ENCODE measurements at regions of chr11 and their contacts with region 1.

Region 1: DNA sequence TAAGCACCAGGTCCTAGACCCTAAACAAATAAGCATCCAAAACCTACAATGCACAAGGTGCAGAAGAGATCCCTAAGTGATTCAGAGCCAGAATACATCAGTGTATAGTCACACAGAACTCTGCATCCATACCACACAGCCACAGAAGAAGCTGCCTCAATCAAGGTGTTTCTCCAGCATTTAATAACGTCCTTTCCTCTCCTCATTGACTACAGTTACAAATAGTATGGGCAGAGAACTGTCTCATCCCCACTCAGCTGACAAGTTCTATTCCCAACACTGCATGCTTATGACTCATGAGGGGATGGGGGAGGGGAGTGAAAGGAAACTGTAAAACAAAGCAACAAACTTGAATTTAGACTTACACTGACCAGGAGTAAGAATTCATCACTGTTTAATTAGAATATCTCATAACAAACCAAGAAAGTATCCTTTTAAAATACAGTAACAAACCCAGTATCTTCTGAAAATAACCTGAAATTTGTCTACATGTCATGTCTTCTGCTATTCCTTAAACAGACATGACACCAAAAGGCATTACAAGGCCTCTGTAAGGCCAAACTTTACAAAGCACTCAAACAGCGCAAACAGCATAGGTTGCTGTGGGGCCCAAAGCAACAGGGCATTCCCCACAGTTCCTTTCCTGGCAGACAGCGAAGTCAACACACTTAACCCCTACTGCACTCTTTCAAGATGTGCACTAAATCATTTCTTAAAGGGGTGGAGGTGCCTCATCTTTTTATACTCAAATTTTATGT is 29.3 kb downstream of the CELF1 start:
- DNase-seq: peak; percentile 66
- H3K4me3 Mint-ChIP-seq: peak overlapping the region; percentile 40
- H3K27ac Mint-ChIP-seq: peak overlapping the region; percentile 91
- H3K4me1 Mint-ChIP-seq: peaks cover 72% of the 10 kb centered on the region
- H3K27me3 Mint-ChIP-seq: no peaks in the 10 kb centered on the region

Region 2: GRCh38 chr11:47216121-47216798 is 307.4 kb before region 1 on chr11:
- CTCF ChIA-PET with region 1: no interaction called
- POLR2A ChIA-PET with region 1: no interaction called
- intact Hi-C with region 1: no loop called
- DNase-seq: peak; percentile 82
- H3K4me3 Mint-ChIP-seq: peak overlapping the region; percentile 97
- H3K27ac Mint-ChIP-seq: peak overlapping the region; percentile 99
- H3K4me1 Mint-ChIP-seq: peaks cover 37% of the 10 kb centered on the region
- H3K27me3 Mint-ChIP-seq: no peaks in the 10 kb centered on the region

Region 3: GRCh38 chr11:47538741-47539574 is 15.3 kb after region 1 on chr11:
- CTCF ChIA-PET with region 1: interaction called, 4 read pairs
- POLR2A ChIA-PET with region 1: interaction called, 5 read pairs
- intact Hi-C with region 1: loop called (anchors 2 kb)
- DNase-seq: no peak
- H3K4me3 Mint-ChIP-seq: no peak overlapping the region
- H3K27ac Mint-ChIP-seq: peak overlapping the region; percentile 87
- H3K4me1 Mint-ChIP-seq: peaks cover 65% of the 10 kb centered on the region
- H3K27me3 Mint-ChIP-seq: no peaks in the 10 kb centered on the region